ENCODE measurements at regions of chr19 and their contacts with region 1.

Region 1: DNA sequence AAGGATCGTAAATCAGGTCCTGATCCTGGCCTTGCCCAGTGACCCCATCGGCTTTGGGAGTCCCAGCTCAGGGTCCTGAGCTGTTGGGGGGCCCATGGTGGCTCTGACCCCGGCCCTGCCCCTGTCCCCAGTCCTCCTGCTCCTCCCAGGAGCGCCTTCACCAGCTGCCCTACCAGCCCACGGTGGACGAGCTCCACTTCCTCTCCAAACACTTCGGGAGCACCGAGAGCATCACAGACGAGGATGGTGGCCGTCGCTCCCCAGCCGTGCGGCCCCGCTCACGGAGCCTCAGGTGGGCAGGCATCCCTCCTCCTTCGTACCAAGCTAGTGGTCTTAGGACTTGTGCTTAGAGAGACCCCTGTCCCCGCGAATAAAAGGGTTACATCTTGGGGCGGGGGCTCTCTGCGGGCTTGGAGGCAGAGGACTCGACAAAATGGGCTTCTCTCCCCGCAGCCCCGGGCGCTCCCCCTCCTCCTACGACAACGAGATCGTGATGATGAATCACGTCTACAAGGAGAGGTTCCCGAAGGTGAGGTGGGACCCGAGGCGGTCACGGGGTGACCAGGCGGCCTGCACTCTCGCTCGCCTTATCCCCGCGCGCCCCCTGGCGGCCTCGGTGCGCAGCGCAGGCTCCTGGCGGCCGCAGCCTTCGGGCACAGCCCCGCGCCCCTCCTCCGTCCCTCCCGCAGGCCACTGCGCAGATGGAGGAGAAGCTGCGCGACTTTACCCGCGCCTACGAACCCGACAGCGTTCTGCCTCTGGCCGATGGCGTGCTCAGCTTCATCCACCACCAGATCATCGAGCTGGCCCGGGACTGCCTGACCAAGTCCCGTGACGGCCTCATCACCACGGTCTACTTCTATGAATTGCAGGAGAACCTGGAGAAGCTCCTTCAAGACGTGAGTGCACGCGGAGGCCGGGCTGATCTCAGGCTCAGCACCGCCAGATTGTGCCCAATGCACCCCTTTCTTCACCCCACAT is 9.1 kb downstream of the MAST1 start:
- DNase-seq: no peak
- ATAC-seq: peak; percentile 100
- H3K4me3 ChIP-seq: no peak overlapping the region
- H3K27ac ChIP-seq: no peak overlapping the region
- H3K4me1 ChIP-seq: no peaks in the 10 kb centered on the region; the same call in 1 of the 2 replicates
- H3K27me3 ChIP-seq: no peaks in the 10 kb centered on the region; a peak in 1 of 4 replicates
- CTCF ChIP-seq: peak; percentile 92 to 98 (median 97); a peak in 5 of 6 replicates
- EP300 ChIP-seq: no peak
- POLR2A ChIP-seq: no peak
- RAD21 ChIP-seq: peak; percentile 88

Region 2: GRCh38 chr19:12766051-12766521 is 81.4 kb before region 1 on chr19:
- CTCF ChIA-PET with region 1: interaction called, 235 read pairs
- POLR2A ChIA-PET with region 1: interaction called, 4 read pairs
- RAD21 ChIA-PET with region 1: interaction called, 76 read pairs
- SMC1A ChIA-PET with region 1: interaction called, 17 read pairs
- in situ Hi-C with region 1: loop called (anchors 5 kb)
- intact Hi-C with region 1: loop called (anchors 1 kb)
- DNase-seq: no peak
- ATAC-seq: peak; percentile 94
- H3K4me3 ChIP-seq: peak overlapping the region; percentile 49; the same call in 1 of the 2 replicates
- H3K27ac ChIP-seq: no peak overlapping the region
- H3K4me1 ChIP-seq: no peaks in the 10 kb centered on the region; the same call in 1 of the 2 replicates
- H3K27me3 ChIP-seq: no peaks in the 10 kb centered on the region; a peak in 1 of 4 replicates
- CTCF ChIP-seq: peak; percentile 80 to 96 (median 86)
- EP300 ChIP-seq: no peak
- POLR2A ChIP-seq: no peak
- RAD21 ChIP-seq: peak; percentile 65

Region 3: DNA sequence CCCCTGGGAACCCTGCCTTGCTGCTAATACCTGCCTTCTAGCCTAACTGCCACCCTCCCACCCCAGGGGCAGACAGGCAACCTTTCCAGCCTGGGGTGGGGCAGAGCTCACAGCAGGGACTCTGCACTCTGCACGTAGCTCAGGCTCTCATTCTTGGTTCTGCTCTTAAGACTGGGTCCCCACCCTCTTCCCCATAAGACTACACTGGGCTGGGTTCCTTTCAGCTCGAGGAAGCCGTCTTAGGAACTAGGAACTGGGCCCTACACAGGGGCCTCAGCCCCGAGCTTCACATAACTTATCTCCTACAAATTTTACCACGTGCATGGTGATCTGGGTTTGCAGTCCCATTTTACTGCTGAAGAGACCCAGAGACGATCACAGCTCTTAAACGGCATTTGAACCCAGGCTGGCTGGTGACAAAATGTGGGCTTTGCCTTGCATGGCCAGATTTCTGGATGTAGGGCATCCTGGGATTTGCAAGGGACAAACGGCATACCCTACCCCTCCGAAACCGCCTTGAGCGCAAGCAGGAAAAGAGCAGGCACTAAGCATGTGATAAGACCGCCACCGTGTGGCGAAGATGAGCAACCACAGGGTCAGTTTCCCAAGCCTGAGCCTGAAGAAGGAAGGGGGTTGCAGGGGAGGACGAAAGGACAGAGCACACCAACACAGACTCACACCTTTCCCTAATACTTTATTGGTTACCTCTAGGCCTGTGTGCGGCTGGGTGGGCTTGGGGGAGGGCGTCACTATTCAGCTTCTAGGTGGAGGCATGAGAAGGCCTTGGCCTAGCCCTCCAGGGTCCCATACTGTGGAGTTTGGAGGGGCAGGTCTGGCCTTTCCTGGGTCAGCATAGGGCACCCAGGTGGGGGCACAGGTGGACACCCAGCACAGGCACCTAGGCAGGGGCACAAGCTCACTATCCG is 51.0 kb before region 1 on chr19:
- CTCF ChIA-PET with region 1: interaction called, 14 read pairs
- POLR2A ChIA-PET with region 1: interaction called, 6 read pairs
- RAD21 ChIA-PET with region 1: interaction called, 8 read pairs
- SMC1A ChIA-PET with region 1: interaction called, 15 read pairs
- in situ Hi-C with region 1: no loop called
- intact Hi-C with region 1: no loop called
- DNase-seq: no peak
- ATAC-seq: peak; percentile 6; the same call in 2 of the 3 replicates
- H3K4me3 ChIP-seq: peak overlapping the region; percentile 14; the same call in 1 of the 2 replicates
- H3K27ac ChIP-seq: peak overlapping the region; percentile 60
- H3K4me1 ChIP-seq: peaks cover 22% of the 10 kb centered on the region
- H3K27me3 ChIP-seq: no peaks in the 10 kb centered on the region
- CTCF ChIP-seq: peak; percentile 94 to 98 (median 96); a peak in 5 of 6 replicates
- EP300 ChIP-seq: no peak
- POLR2A ChIP-seq: peak; percentile 48
- RAD21 ChIP-seq: peak; percentile 99

Region 4: DNA sequence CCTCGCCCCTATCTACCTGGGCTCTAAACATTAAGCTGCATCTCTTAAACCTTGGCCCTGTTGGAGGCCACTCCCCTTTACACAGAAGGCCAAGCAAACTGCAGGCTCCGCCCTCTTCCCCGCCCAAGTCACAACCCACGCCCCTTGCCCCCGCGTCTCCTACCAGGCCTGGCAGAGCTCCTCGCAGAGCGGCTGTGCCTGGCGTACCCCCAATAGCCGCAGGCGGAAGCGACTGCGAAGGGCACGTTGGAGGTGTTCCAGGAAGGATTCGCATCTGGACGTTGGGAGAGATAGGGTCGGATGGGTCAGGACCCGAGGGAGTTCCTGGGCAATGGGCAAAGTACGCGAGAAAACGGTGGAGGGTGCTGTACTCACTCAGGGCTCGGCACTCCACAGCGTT is 19.0 kb before region 1 on chr19:
- CTCF ChIA-PET with region 1: interaction called, 19 read pairs
- POLR2A ChIA-PET with region 1: interaction called, 3 read pairs
- RAD21 ChIA-PET with region 1: no interaction called
- SMC1A ChIA-PET with region 1: interaction called, 3 read pairs
- in situ Hi-C with region 1: no loop called
- intact Hi-C with region 1: no loop called
- DNase-seq: no peak
- ATAC-seq: peak; percentile 84
- H3K4me3 ChIP-seq: no peak overlapping the region
- H3K27ac ChIP-seq: no peak overlapping the region
- H3K4me1 ChIP-seq: no peaks in the 10 kb centered on the region
- H3K27me3 ChIP-seq: peaks cover 2 to 7% of the 10 kb centered on the region in 2 experiments; a peak in 1 of 4 replicates
- CTCF ChIP-seq: no peak
- EP300 ChIP-seq: no peak
- POLR2A ChIP-seq: no peak
- RAD21 ChIP-seq: no peak

Region 5: DNA sequence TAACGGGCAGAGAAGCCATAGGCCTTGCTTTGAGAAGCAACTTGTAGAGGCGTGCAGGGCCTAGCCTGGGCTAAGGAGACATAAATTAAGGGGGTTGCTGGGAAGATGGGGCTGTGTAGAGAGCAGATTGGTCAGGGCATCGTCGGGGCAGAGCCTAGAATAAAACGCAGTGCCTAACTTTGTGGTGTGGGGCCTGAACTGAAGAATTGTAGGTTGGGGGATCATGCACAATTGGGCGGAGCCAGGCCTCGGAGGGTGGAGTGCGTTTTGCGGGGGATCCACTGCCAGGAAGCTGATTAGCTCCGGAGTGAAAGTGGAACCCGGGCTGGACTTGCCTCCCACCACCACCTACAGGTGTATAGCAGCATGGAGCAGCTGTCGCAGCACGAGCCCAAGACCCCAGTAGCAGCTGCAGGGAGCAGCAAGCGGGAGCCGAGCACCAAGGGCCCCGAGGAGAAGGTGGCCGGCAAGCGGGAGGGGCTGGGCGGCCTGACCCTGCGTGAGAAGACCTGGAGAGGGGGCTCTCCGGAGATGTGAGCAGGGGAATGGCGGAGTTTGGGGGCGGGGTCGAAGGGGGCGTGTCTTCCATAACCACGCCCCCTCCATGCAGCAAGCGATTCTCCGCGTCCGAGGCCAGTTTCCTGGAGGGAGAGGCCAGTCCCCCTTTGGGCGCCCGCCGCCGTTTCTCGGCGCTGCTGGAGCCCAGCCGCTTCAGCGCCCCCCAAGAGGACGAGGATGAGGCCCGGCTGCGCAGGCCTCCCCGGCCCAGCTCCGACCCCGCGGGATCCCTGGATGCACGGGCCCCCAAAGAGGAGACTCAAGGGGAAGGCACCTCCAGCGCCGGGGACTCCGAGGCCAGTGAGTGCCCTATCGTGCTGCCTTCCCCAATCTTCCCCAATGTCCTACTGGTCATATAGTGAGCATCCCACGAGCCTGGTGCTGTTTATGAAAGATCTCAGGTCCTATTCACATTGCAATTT is 20.0 kb after region 1 on chr19:
- CTCF ChIA-PET with region 1: interaction called, 29 read pairs
- POLR2A ChIA-PET with region 1: no interaction called
- RAD21 ChIA-PET with region 1: no interaction called
- SMC1A ChIA-PET with region 1: interaction called, 5 read pairs
- in situ Hi-C with region 1: no loop called
- intact Hi-C with region 1: no loop called
- DNase-seq: peak; percentile 31
- ATAC-seq: peak; percentile 87
- H3K4me3 ChIP-seq: peak overlapping the region; percentile 75
- H3K27ac ChIP-seq: no peak overlapping the region
- H3K4me1 ChIP-seq: peaks cover 5% of the 10 kb centered on the region; the same call in 1 of the 2 replicates
- H3K27me3 ChIP-seq: no peaks in the 10 kb centered on the region
- CTCF ChIP-seq: 0 out of 6 replicates have a peak, but pooled peaks of 1 of the 3 experiments have one; percentile 1
- EP300 ChIP-seq: 0 out of 4 replicates have a peak, but pooled peaks of 1 of the 2 experiments have one; percentile 37
- POLR2A ChIP-seq: peak; percentile 45; the same call in 1 of the 2 replicates
- RAD21 ChIP-seq: no peak

Region 6: DNA sequence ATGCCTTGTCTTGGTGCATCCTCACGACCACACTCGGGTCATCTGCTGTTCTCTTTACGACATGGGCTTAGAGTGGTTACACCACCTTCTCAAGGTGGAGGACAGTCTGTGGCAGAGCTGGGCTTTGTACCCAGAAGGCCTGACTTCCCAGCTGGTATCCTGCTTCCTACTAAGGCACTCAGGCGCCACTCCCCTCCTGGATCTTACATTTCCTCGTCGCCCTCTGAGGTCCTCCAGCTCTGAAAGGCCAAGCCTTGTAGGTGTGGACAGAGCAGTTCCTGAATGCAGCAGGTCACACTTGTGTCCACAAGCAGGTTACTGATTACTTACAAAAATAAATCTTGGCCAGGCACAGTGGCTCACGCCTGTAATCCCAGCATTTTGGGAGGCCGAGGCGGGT is 59.7 kb after region 1 on chr19:
- CTCF ChIA-PET with region 1: interaction called, 10 read pairs
- POLR2A ChIA-PET with region 1: no interaction called
- RAD21 ChIA-PET with region 1: no interaction called
- SMC1A ChIA-PET with region 1: no interaction called
- in situ Hi-C with region 1: no loop called
- intact Hi-C with region 1: no loop called
- DNase-seq: no peak
- ATAC-seq: no peak
- H3K4me3 ChIP-seq: no peak overlapping the region
- H3K27ac ChIP-seq: no peak overlapping the region
- H3K4me1 ChIP-seq: no peaks in the 10 kb centered on the region
- H3K27me3 ChIP-seq: no peaks in the 10 kb centered on the region
- CTCF ChIP-seq: no peak
- EP300 ChIP-seq: no peak
- POLR2A ChIP-seq: no peak
- RAD21 ChIP-seq: no peak

Measured in GM12878 (cell line).